ENCODE measurements at regions of chr1 and their contacts with region 1.

Region 1: GRCh38 chr1:165073185-165074007 is 283.1 kb downstream of the LMX1A start:
- DNase-seq: no peak
- H3K4me3 ChIP-seq: no peak overlapping the region
- H3K27ac ChIP-seq: no peak overlapping the region
- H3K4me1 ChIP-seq: no peaks in the 10 kb centered on the region
- H3K27me3 ChIP-seq: no peaks in the 10 kb centered on the region
- CTCF ChIP-seq: peak in 10 of 11 experiments; percentile 19 to 68 (median 52)
- POLR2A ChIP-seq: no peak

Region 2: DNA sequence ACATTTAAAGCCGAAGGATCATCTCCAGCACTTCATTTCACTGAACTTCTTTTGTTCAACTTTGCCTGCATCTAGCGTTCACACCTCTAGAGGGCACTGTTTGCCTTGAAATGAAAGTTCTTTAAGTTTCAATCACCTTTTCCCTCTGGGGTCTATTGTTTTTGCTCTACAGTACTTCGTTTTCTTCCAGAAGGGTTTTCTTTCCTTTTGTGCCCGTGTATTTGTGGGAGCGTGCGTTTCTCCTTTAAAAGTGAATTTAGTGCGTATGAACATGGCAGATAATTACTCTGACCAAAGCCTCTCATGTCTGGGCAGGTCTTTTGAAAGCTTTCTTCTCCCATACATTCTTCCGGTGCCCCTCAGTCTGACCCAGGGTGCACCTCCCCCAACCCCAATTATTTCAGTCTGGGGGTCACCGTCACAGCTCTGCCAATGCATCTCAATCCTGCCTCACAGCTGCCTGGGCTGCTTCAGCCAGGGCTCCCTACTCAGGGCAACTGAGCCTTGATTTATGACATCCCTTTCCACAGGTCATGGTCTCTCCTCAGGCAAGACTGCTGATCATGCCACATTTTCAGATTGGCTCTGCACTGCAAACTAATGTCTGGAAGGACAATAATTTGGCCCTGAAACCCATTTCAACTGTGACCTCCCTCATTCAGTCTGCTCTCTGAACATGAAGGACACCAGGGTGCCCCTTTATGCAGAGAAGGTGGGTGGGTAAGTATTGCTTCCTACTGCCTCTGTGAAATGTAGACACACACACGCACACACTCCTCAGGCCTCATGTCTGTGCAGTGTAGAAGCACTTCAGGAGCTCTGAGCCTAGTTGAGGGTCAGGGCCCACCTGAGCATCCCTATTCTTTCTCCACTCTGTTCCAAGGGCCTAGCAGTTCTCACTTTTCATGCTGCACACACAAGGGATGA is 1663.1 kb before region 1 on chr1:
- intact Hi-C with region 1: loop called (anchors 5 kb)
- DNase-seq: no peak
- H3K4me3 ChIP-seq: no peak overlapping the region
- H3K27ac ChIP-seq: no peak overlapping the region
- H3K4me1 ChIP-seq: peaks cover 0 to 11% (median 4%) of the 10 kb centered on the region in 6 donors
- H3K27me3 ChIP-seq: peaks cover 0 to 9% (median 0%) of the 10 kb centered on the region in 7 donors
- CTCF ChIP-seq: peak in 10 of 11 experiments; percentile 25 to 85 (median 69)
- POLR2A ChIP-seq: no peak

Region 3: DNA sequence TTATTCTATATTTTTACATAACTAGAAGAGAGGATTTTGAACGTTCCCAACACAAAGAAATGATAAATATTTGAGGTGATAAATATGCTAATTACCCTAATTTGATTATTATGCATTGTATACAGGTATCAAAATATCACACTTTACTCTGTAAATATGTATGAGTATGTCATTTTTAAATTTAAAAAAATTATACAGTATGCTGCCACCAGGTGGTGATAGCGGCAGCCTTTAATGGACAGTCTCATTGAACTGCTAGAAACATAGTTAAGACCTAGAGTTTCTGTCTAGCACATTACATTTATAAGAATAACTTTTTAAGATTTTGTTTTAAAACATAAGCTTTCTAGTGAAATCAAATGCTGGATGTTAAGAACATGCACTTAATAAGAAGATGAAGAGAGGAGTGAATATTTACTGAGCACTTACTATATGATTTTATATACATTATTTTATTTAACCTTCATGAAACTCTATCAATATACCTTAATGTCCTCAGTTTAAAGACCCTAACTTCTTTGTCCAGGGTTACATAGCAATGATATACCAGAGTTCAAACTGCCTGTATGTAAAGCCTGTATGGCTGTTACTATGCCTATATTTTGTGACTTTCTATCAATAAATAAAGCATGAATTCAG is 1544.6 kb before region 1 on chr1:
- intact Hi-C with region 1: loop called (anchors 10 kb)
- DNase-seq: no peak
- H3K4me3 ChIP-seq: no peak overlapping the region
- H3K27ac ChIP-seq: no peak overlapping the region
- H3K4me1 ChIP-seq: no peaks in the 10 kb centered on the region
- H3K27me3 ChIP-seq: no peaks in the 10 kb centered on the region
- CTCF ChIP-seq: peak in 5 of 11 experiments; percentile 12 to 51 (median 44)
- POLR2A ChIP-seq: no peak

Region 4: GRCh38 chr1:164803366-164803765 is 270.0 kb before region 1 on chr1:
- intact Hi-C with region 1: loop called (anchors 10 kb)
- DNase-seq: no peak
- H3K4me3 ChIP-seq: no peak overlapping the region
- H3K27ac ChIP-seq: no peak overlapping the region
- H3K4me1 ChIP-seq: peaks cover 0 to 14% (median 5%) of the 10 kb centered on the region in 6 donors
- H3K27me3 ChIP-seq: no peaks in the 10 kb centered on the region
- CTCF ChIP-seq: no peak
- POLR2A ChIP-seq: no peak

Measured in spleen (tissue), 13 donors.